PC-3 (cell line): ENCODE measurements at regions of chr3 and their contacts with region 1.

Region 1: DNA sequence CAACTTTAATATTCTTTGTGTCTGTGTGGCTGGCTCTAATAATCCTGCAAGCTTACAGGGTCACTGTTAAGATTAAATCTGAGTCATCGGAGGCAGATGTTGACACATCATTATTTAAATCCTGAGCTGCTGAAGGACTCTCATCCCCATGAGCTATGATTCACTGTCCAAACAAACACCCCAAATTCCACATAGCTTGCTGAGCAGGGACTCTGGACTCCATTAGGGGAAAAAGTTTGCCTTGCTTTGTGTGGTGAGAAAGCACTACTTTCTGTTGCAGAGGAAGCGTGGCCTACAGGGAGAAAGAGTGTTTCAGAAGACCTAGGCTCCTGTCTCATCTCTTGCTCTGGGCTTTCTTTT is 213.7 kb downstream of the PDCD6IP start:
- DNase-seq: peak; percentile 98
- ATAC-seq: peak; percentile 73
- H3K4me3 ChIP-seq: no peak overlapping the region
- H3K27ac ChIP-seq: peak overlapping the region; percentile 99
- H3K4me1 ChIP-seq: peaks cover 44% of the 10 kb centered on the region
- H3K27me3 ChIP-seq: no peaks in the 10 kb centered on the region
- CTCF ChIP-seq: no peak

Region 2: GRCh38 chr3:33798411-33799201 is 213.5 kb before region 1 on chr3 and contains the start of gene PDCD6IP:
- CTCF ChIA-PET with region 1: interaction called, 3 read pairs
- POLR2A ChIA-PET with region 1: interaction called, 3 read pairs
- intact Hi-C with region 1: loop called (anchors 5 kb)
- DNase-seq: peak; percentile 97
- ATAC-seq: peak; percentile 90
- H3K4me3 ChIP-seq: peak within 1 kb of the TSS; percentile 84
- H3K27ac ChIP-seq: peak within 1 kb of the TSS; percentile 86
- H3K4me1 ChIP-seq: peaks cover 41% of the 10 kb centered on the region
- H3K27me3 ChIP-seq: no peaks in the 10 kb centered on the region
- CTCF ChIP-seq: no peak
- total RNA-seq, gene PDCD6IP: 185 and 266 TPM in 2 replicates

Region 3: DNA sequence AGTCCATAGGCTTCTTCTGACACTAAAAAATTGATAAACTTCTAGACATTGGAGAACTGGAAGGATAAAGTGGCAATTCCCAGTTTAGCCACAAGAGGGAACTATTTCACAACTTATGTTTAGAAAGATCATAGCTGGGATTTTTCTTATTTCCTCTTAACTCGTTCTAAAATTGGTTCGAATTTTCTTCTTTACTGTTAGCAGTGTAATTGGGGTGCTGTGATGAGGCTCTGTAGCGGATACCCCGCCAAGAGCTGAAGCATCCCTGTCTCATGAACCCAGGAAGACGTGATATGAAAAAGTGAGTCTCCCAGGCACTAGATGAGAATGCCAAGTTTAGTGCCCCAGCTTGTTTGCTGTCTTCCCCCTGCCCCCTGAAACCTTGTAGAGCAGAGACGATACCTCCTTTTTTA is 128.5 kb before region 1 on chr3:
- CTCF ChIA-PET with region 1: interaction called, 9 read pairs
- POLR2A ChIA-PET with region 1: no interaction called
- intact Hi-C with region 1: loop called (anchors 2 kb)
- DNase-seq: peak; percentile 85
- ATAC-seq: peak; percentile 41
- H3K4me3 ChIP-seq: no peak overlapping the region
- H3K27ac ChIP-seq: no peak overlapping the region
- H3K4me1 ChIP-seq: no peaks in the 10 kb centered on the region
- H3K27me3 ChIP-seq: no peaks in the 10 kb centered on the region
- CTCF ChIP-seq: peak; percentile 96

Region 4: GRCh38 chr3:33942483-33943150 is 69.5 kb before region 1 on chr3:
- CTCF ChIA-PET with region 1: no interaction called
- POLR2A ChIA-PET with region 1: no interaction called
- intact Hi-C with region 1: no loop called
- DNase-seq: peak; percentile 28
- ATAC-seq: no peak; the same call in 1 of the 2 replicates
- H3K4me3 ChIP-seq: no peak overlapping the region
- H3K27ac ChIP-seq: no peak overlapping the region
- H3K4me1 ChIP-seq: no peaks in the 10 kb centered on the region
- H3K27me3 ChIP-seq: peaks cover 22% of the 10 kb centered on the region; the same call in 1 of the 2 replicates
- CTCF ChIP-seq: no peak

Region 5: DNA sequence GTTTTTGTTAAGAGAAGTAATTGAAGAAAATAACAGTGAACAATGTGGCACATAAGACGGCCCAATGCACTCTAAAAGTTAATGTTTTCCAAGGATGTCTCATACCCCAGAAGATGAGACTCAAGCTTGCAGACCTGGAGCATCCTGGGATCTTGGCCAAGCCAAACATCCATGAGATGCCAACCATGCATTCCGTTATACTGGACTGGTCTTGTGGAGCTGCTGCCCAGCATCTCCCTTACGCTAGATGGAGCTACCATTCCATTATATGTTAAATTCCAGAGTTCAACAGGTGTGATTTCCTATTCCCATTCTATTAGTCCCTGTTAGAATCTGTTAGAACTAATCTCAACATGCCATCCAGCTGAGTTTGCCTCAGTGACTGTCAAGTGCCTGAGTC is 31.8 kb before region 1 on chr3:
- CTCF ChIA-PET with region 1: interaction called, 8 read pairs
- POLR2A ChIA-PET with region 1: no interaction called
- intact Hi-C with region 1: loop called (anchors 1 kb)
- DNase-seq: peak; percentile 84
- ATAC-seq: peak; percentile 99
- H3K4me3 ChIP-seq: no peak overlapping the region
- H3K27ac ChIP-seq: no peak overlapping the region
- H3K4me1 ChIP-seq: no peaks in the 10 kb centered on the region
- H3K27me3 ChIP-seq: no peaks in the 10 kb centered on the region
- CTCF ChIP-seq: peak; percentile 91

Region 6: GRCh38 chr3:34001990-34002389 is 10.1 kb before region 1 on chr3:
- CTCF ChIA-PET with region 1: no interaction called
- POLR2A ChIA-PET with region 1: no interaction called
- intact Hi-C with region 1: loop called (anchors 1 kb)
- DNase-seq: peak; percentile 80
- ATAC-seq: peak; percentile 55
- H3K4me3 ChIP-seq: no peak overlapping the region
- H3K27ac ChIP-seq: peak overlapping the region; percentile 86
- H3K4me1 ChIP-seq: peaks cover 39% of the 10 kb centered on the region
- H3K27me3 ChIP-seq: no peaks in the 10 kb centered on the region
- CTCF ChIP-seq: no peak

Region 7: GRCh38 chr3:34109846-34110245 is 97.8 kb after region 1 on chr3:
- CTCF ChIA-PET with region 1: no interaction called
- POLR2A ChIA-PET with region 1: no interaction called
- intact Hi-C with region 1: loop called (anchors 1 kb)
- DNase-seq: no peak
- ATAC-seq: no peak
- H3K4me3 ChIP-seq: no peak overlapping the region
- H3K27ac ChIP-seq: no peak overlapping the region
- H3K4me1 ChIP-seq: peaks cover 7% of the 10 kb centered on the region
- H3K27me3 ChIP-seq: no peaks in the 10 kb centered on the region
- CTCF ChIP-seq: no peak

Region 8: GRCh38 chr3:35946121-35946853 is 1934.2 kb after region 1 on chr3:
- CTCF ChIA-PET with region 1: no interaction called
- POLR2A ChIA-PET with region 1: no interaction called
- intact Hi-C with region 1: loop called (anchors 10 kb)
- DNase-seq: peak; percentile 68
- ATAC-seq: peak; percentile 18
- H3K4me3 ChIP-seq: no peak overlapping the region
- H3K27ac ChIP-seq: peak overlapping the region; percentile 86
- H3K4me1 ChIP-seq: peaks cover 34% of the 10 kb centered on the region
- H3K27me3 ChIP-seq: no peaks in the 10 kb centered on the region
- CTCF ChIP-seq: peak; percentile 76